ENCODE measurements at regions of chr1 and their contacts with region 1.

Region 1: GRCh38 chr1:226702957-226703831 is 35.9 kb downstream of the ITPKB start:
- DNase-seq: peak; percentile 84
- ATAC-seq: peak; percentile 76
- H3K4me3 Mint-ChIP-seq: peak overlapping the region; percentile 83
- H3K27ac Mint-ChIP-seq: peak overlapping the region; percentile 97
- H3K4me1 Mint-ChIP-seq: peaks cover 79% of the 10 kb centered on the region
- H3K27me3 Mint-ChIP-seq: no peaks in the 10 kb centered on the region
- CTCF ChIP-seq: no peak

Region 2: GRCh38 chr1:226589008-226589733 is 114.0 kb before region 1 on chr1:
- CTCF ChIA-PET with region 1: no interaction called
- POLR2A ChIA-PET with region 1: no interaction called
- intact Hi-C with region 1: no loop called
- DNase-seq: no peak
- ATAC-seq: no peak
- H3K4me3 Mint-ChIP-seq: no peak overlapping the region
- H3K27ac Mint-ChIP-seq: no peak overlapping the region
- H3K4me1 Mint-ChIP-seq: no peaks in the 10 kb centered on the region
- H3K27me3 Mint-ChIP-seq: peaks cover 2% of the 10 kb centered on the region
- CTCF ChIP-seq: no peak

Region 3: GRCh38 chr1:226619031-226619430 is 84.2 kb before region 1 on chr1:
- CTCF ChIA-PET with region 1: no interaction called
- POLR2A ChIA-PET with region 1: no interaction called
- intact Hi-C with region 1: no loop called
- DNase-seq: no peak
- ATAC-seq: no peak
- H3K4me3 Mint-ChIP-seq: no peak overlapping the region
- H3K27ac Mint-ChIP-seq: no peak overlapping the region
- H3K4me1 Mint-ChIP-seq: no peaks in the 10 kb centered on the region
- H3K27me3 Mint-ChIP-seq: no peaks in the 10 kb centered on the region
- CTCF ChIP-seq: no peak

Region 4: GRCh38 chr1:226723657-226724532 is 20.7 kb after region 1 on chr1:
- CTCF ChIA-PET with region 1: interaction called, 12 read pairs
- POLR2A ChIA-PET with region 1: interaction called, 19 read pairs
- intact Hi-C with region 1: no loop called
- DNase-seq: peak; percentile 59
- ATAC-seq: peak; percentile 31
- H3K4me3 Mint-ChIP-seq: peak overlapping the region; percentile 92
- H3K27ac Mint-ChIP-seq: peak overlapping the region; percentile 95
- H3K4me1 Mint-ChIP-seq: peaks cover 91% of the 10 kb centered on the region
- H3K27me3 Mint-ChIP-seq: no peaks in the 10 kb centered on the region
- CTCF ChIP-seq: no peak

Region 5: DNA sequence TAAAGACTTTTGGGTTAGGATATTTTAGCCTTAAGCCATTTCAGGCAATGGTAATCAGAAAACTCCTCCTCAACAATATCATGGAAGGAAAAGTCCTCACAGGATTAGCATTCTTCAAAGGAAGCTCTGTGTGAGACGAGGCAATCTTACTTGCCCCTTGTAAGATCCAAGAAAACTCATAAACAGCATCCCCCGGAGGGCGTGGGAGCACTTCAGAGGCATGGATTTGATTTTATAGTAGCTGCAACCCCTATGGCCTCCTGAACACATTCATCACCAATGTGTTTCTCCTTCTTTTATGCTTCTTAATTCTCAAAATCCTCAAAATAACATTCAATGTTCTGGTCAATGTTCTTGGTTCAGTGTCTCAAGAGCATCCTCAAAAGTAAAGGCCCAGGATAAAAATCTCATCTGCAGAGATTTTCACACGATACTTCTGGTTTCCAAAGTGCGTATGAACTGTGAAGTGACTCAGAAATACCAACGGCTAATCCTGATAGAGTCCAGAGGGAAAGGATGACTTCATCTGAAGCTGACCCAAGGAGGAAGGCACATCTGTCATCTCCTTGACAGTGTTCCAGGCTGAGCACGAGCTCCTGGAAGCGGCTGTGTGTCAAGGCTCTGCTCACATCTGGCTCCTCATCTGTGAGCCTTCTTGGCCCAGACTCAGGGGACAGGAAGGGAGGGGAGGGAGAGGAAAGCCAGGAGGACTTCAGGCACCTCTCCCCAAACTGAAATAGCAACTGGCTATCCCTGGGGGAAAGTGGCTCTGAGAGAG is 117.9 kb after region 1 on chr1:
- CTCF ChIA-PET with region 1: no interaction called
- POLR2A ChIA-PET with region 1: no interaction called
- intact Hi-C with region 1: no loop called
- DNase-seq: no peak
- ATAC-seq: no peak
- H3K4me3 Mint-ChIP-seq: no peak overlapping the region
- H3K27ac Mint-ChIP-seq: no peak overlapping the region
- H3K4me1 Mint-ChIP-seq: peaks cover 19% of the 10 kb centered on the region
- H3K27me3 Mint-ChIP-seq: no peaks in the 10 kb centered on the region
- CTCF ChIP-seq: no peak

Measured in activated CD8-positive, alpha-beta T cell treated with anti-CD3 and anti-CD28 coated beads for 36 hours (primary cell).